CD4-positive, alpha-beta T cell (primary cell): ENCODE measurements at regions of chr12 and their contacts with region 1.

Region 1: DNA sequence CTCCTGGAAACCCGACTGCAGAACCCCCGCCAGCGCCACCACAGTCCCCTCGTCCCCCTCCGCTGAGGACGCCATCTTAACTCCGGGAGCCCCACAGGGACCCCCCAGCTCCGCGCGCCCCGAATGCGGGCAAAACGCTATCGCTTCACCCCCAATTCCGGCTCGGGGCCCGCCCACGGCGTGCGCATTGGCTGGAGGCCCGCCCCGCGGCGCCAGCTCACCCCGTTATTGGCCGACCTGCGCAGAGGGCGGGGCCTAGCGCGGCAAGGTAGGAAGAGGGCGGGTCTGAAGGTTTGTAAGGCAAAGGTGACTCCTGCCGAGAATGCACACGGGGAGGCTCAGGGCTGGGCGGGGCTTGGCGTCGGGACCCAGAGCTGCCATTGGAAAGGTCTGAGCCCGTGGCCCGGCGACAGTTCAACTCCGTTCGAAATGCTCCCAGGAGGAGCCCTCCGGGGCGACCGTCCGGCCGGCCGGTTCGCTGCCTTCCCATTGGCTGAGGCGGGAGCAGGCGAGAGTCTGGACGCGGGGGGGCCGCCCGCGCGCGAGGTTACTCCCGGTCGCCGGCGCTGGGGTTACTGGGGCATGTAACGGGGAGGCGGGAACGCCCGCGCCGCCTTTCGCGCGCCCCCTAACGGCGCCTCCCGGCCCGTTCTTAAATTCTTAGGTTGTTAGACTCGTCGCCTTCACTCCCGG is at the start of gene LPCAT3:
- DNase-seq: peak; percentile 94 to 99 (median 96)
- ATAC-seq: peak; percentile 96
- H3K4me3 ChIP-seq: peak within 1 kb of the TSS; percentile 98
- H3K4me3 Mint-ChIP-seq: peak within 1 kb of the TSS; percentile 87
- H3K27ac ChIP-seq: peak within 1 kb of the TSS; percentile 87 to 89
- H3K27ac Mint-ChIP-seq: peak within 1 kb of the TSS; percentile 62
- H3K4me1 ChIP-seq: peaks cover 24% of the 10 kb centered on the region
- H3K4me1 Mint-ChIP-seq: peaks cover 30% of the 10 kb centered on the region
- H3K27me3 ChIP-seq: no peaks in the 10 kb centered on the region
- H3K27me3 Mint-ChIP-seq: no peaks in the 10 kb centered on the region
- CTCF ChIP-seq: peak; percentile 87
- total RNA-seq, gene LPCAT3: 11.8 to 14.8 TPM

Region 2: DNA sequence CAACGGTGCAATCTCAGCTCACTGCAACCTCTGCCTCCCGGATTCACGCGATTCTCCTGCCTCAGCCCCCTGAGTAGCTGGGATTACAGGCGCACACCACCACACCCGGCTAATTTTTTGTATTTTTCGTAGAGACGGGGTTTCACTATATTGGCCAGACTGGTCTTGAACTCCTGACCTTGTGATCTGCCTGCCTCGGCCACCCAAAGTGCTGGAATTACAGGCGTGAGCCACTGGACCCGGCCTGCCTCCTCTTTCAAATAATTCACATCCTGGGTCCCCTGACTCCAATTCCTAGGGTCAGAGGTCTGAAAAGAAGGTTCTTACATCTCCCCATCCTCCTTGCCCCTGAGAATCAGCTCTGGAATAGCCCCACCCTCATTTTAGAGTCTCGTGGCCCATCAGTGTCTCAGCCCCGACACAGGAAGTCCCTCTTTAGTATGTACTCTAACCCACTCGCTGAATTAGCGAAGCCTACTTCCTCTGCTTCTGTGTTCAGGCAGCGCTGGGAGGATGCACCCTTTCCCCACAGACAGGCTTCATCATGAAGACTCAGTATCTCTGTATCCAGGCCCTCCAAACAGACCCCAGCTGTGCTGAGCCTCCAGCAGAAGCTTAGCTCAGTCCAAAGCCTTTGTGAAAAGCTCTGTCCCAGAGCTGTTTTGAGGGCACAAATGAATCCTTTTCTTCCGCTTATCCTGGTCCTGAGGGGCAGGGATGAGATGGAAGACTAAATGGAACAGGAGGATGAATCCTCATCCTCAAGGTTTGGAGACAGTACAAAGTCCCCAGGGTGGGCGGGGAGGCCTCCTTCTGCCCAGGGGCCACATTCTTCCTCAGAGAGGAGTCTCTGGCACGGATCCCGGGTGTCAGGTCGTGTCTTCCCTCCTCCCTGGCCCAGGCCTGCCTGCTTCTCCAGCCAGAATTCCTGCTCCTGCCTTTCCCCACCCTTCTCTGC is 386.2 kb before region 1 on chr12:
- CTCF ChIA-PET with region 1: no interaction called
- POLR2A ChIA-PET with region 1: no interaction called
- intact Hi-C with region 1: no loop called
- DNase-seq: peak in 13 of 14 experiments; percentile 29 to 84 (median 47)
- ATAC-seq: peak; percentile 81
- H3K4me3 ChIP-seq: peak overlapping the region; percentile 51
- H3K4me3 Mint-ChIP-seq: peak overlapping the region; percentile 78
- H3K27ac ChIP-seq: peak overlapping the region; percentile 66 to 67
- H3K27ac Mint-ChIP-seq: peak overlapping the region; percentile 91
- H3K4me1 ChIP-seq: peaks cover 70% of the 10 kb centered on the region
- H3K4me1 Mint-ChIP-seq: peaks cover 63% of the 10 kb centered on the region
- H3K27me3 ChIP-seq: no peaks in the 10 kb centered on the region
- H3K27me3 Mint-ChIP-seq: no peaks in the 10 kb centered on the region
- CTCF ChIP-seq: no peak

Region 3: DNA sequence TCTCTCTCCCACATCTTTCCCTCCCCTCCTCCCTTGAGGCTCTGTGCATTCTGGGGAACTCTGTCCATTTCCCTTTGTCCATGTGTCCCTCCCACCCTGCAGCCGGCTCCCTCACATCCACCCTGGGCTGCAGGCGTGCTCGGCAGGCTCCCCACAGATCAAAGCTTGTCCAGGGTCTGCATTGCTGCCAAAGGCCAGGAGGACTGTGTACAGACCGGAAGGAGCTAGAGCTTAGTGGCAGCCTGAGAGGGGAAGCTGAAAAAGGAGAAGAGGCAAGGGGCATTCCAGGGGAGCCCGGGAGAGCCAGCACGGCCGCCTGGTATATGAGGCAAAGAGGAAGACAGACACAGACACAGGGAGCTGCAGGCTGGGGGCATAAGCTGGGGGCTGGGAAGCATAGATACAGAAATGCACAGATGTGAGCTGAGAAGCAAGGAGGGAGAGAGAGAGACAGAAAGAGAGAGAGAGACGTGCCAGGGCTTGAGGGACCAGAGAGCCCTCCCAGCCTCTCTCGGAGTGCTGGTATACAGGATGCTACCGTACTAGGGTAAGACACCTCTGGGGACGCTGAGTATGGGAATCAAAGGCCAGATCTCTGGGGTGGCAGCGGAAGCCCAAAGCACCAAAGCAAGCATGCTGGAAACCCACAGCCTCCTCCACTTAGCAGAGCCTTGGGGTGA is 225.8 kb before region 1 on chr12:
- CTCF ChIA-PET with region 1: no interaction called
- POLR2A ChIA-PET with region 1: no interaction called
- intact Hi-C with region 1: no loop called
- DNase-seq: peak in 12 of 14 experiments; percentile 41 to 75 (median 58)
- ATAC-seq: peak; percentile 69
- H3K4me3 ChIP-seq: peak overlapping the region; percentile 66
- H3K4me3 Mint-ChIP-seq: peak overlapping the region; percentile 96
- H3K27ac ChIP-seq: peak overlapping the region; percentile 72 to 81
- H3K27ac Mint-ChIP-seq: peak overlapping the region; percentile 93
- H3K4me1 ChIP-seq: peaks cover 79% of the 10 kb centered on the region
- H3K4me1 Mint-ChIP-seq: peaks cover 80% of the 10 kb centered on the region
- H3K27me3 ChIP-seq: no peaks in the 10 kb centered on the region
- H3K27me3 Mint-ChIP-seq: no peaks in the 10 kb centered on the region
- CTCF ChIP-seq: no peak

Region 4: GRCh38 chr12:6921996-6922946 is 96.2 kb before region 1 on chr12:
- CTCF ChIA-PET with region 1: interaction called, 3 read pairs
- POLR2A ChIA-PET with region 1: no interaction called
- intact Hi-C with region 1: loop called (anchors 5 kb)
- DNase-seq: no peak
- ATAC-seq: no peak
- H3K4me3 ChIP-seq: no peak overlapping the region
- H3K4me3 Mint-ChIP-seq: no peak overlapping the region
- H3K27ac ChIP-seq: no peak overlapping the region
- H3K27ac Mint-ChIP-seq: no peak overlapping the region
- H3K4me1 ChIP-seq: peaks cover 21% of the 10 kb centered on the region
- H3K4me1 Mint-ChIP-seq: peaks cover 24% of the 10 kb centered on the region
- H3K27me3 ChIP-seq: no peaks in the 10 kb centered on the region
- H3K27me3 Mint-ChIP-seq: no peaks in the 10 kb centered on the region
- CTCF ChIP-seq: no peak

Region 5: GRCh38 chr12:6965026-6965661 is 53.4 kb before region 1 on chr12:
- CTCF ChIA-PET with region 1: interaction called, 9 read pairs
- POLR2A ChIA-PET with region 1: interaction called, 8 read pairs
- intact Hi-C with region 1: loop called (anchors 1 to 2 kb)
- DNase-seq: peak; percentile 83 to 96 (median 86)
- ATAC-seq: peak; percentile 50
- H3K4me3 ChIP-seq: no peak overlapping the region
- H3K4me3 Mint-ChIP-seq: peak overlapping the region; percentile 79
- H3K27ac ChIP-seq: peak overlapping the region; percentile 38 to 39
- H3K27ac Mint-ChIP-seq: peak overlapping the region; percentile 90
- H3K4me1 ChIP-seq: peaks cover 70% of the 10 kb centered on the region
- H3K4me1 Mint-ChIP-seq: peaks cover 58% of the 10 kb centered on the region
- H3K27me3 ChIP-seq: no peaks in the 10 kb centered on the region
- H3K27me3 Mint-ChIP-seq: no peaks in the 10 kb centered on the region
- CTCF ChIP-seq: peak; percentile 94

Region 6: DNA sequence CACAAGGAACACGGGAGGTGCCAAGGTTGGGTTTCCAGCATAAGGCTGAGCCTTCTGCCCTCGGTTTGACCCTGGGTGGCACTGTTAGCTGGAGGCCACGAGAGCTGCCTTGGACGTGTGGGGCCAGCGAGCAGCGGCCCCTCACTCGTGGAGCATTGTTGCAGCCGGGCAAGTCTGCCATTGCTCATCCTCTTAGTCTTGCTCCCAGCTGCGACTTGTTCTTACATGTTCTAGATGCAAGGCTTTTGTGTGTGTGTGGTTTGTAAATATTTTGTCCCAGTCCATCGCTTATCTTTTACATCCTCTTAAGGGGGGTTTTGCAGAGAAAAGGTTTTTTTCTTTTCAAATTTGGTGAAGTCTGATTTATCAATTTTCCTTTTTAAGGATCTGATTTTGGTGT is 20.9 kb after region 1 on chr12:
- CTCF ChIA-PET with region 1: no interaction called
- POLR2A ChIA-PET with region 1: no interaction called
- intact Hi-C with region 1: no loop called
- DNase-seq: no peak
- ATAC-seq: no peak
- H3K4me3 ChIP-seq: no peak overlapping the region
- H3K4me3 Mint-ChIP-seq: no peak overlapping the region
- H3K27ac ChIP-seq: no peak overlapping the region
- H3K27ac Mint-ChIP-seq: no peak overlapping the region
- H3K4me1 ChIP-seq: no peaks in the 10 kb centered on the region
- H3K4me1 Mint-ChIP-seq: no peaks in the 10 kb centered on the region
- H3K27me3 ChIP-seq: no peaks in the 10 kb centered on the region
- H3K27me3 Mint-ChIP-seq: no peaks in the 10 kb centered on the region
- CTCF ChIP-seq: no peak

Region 7: GRCh38 chr12:7060353-7060954 is 42.0 kb after region 1 on chr12 and contains the start of gene C1S:
- CTCF ChIA-PET with region 1: no interaction called
- POLR2A ChIA-PET with region 1: no interaction called
- intact Hi-C with region 1: no loop called
- DNase-seq: no peak
- ATAC-seq: no peak
- H3K4me3 ChIP-seq: no peak within 1 kb of the TSS
- H3K4me3 Mint-ChIP-seq: no peak within 1 kb of the TSS
- H3K27ac ChIP-seq: no peak within 1 kb of the TSS
- H3K27ac Mint-ChIP-seq: no peak within 1 kb of the TSS
- H3K4me1 ChIP-seq: no peaks in the 10 kb centered on the region
- H3K4me1 Mint-ChIP-seq: no peaks in the 10 kb centered on the region
- H3K27me3 ChIP-seq: peaks cover 7 to 12% of the 10 kb centered on the region in 2 experiments
- H3K27me3 Mint-ChIP-seq: peaks cover 34% of the 10 kb centered on the region
- CTCF ChIP-seq: no peak
- total RNA-seq, gene C1S: 3.8 to 4.6 TPM

Region 8: DNA sequence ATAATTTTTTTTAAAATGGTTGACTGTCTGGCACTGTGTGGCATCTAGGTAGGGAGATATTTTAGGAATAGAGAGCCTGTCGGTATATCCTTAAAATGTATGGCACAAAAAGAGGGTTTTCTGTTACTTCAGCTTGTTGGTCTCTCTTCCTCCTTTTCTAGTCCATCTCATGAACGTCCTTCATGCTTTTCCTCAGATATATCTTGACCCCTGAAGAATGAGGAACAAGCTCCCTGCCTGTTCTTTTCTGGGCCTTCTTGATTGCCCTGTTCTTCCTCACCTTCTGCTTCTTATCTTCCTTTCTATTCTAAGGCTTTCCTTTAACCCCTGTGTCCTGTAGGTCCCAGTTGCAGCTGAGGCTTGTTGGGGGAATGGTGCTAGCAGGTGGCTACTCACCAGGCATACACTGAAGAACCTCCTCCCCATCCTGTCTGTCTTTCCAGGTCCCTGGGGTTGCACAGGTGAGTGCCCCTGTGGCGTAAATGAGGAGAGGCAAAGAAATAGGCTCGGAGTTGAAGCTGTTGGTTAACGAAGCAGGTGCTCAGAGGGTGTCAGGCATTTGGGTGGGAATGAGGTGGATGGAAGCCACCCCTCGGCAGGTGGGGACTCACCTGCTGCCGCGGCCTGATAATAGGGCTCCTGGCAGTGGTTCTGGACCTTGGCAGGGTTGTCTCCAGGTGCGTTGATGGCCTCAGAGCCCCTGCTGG is 80.9 kb after region 1 on chr12:
- CTCF ChIA-PET with region 1: no interaction called
- POLR2A ChIA-PET with region 1: no interaction called
- intact Hi-C with region 1: loop called in 1 of 2 experiments (anchors 5 kb)
- DNase-seq: no peak
- ATAC-seq: no peak
- H3K4me3 ChIP-seq: no peak overlapping the region
- H3K4me3 Mint-ChIP-seq: no peak overlapping the region
- H3K27ac ChIP-seq: no peak overlapping the region
- H3K27ac Mint-ChIP-seq: no peak overlapping the region
- H3K4me1 ChIP-seq: peaks cover 5% of the 10 kb centered on the region
- H3K4me1 Mint-ChIP-seq: peaks cover 18% of the 10 kb centered on the region
- H3K27me3 ChIP-seq: no peaks in the 10 kb centered on the region
- H3K27me3 Mint-ChIP-seq: no peaks in the 10 kb centered on the region
- CTCF ChIP-seq: no peak

Region 9: DNA sequence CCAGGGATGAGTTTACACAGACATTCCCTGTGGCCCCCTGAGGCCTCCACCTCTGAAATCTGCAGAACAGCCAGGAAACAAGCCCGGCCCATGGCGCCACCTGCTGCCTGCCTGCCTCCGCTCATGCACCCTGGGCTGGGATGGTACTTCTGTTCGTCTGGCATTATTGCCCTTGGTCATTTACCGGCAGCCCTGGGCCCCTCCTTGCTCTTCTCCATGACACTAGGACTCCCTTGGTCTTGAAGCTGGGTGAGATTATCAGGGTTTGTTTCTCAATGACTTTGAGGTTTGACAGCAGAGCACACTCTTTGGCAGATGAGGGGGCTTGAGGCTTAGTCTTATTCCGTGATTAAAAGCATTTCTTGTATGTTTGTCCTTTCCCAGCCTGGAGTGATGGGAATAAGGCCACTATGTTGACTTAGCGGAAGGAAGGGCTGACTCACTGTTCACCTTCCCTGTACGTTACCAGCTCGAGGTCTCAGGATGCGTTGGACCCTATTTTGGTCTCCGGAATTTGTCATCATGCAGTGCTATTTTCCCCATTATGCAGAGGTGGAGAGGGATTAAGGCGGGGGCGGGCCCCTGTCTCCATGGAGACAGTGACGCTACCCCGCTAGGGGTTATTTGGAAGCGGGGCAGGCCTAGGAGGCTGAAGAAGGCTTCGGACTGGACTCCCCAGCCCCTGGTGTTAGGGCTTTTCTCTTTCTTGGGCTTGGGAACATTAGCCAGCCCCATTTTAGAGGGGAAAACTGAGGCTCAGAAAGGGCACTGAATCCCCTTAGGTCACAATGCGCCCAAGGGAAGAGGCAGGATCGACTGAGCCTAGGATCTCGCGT is 170.3 kb after region 1 on chr12:
- CTCF ChIA-PET with region 1: interaction called, 3 read pairs
- POLR2A ChIA-PET with region 1: no interaction called
- intact Hi-C with region 1: loop called in 1 of 2 experiments (anchors 5 kb)
- DNase-seq: peak; percentile 43 to 79 (median 58)
- ATAC-seq: peak; percentile 44
- H3K4me3 ChIP-seq: peak overlapping the region; percentile 91
- H3K4me3 Mint-ChIP-seq: peak overlapping the region; percentile 98
- H3K27ac ChIP-seq: peak overlapping the region; percentile 91 to 93
- H3K27ac Mint-ChIP-seq: peak overlapping the region; percentile 97
- H3K4me1 ChIP-seq: peaks cover 27% of the 10 kb centered on the region
- H3K4me1 Mint-ChIP-seq: peaks cover 46% of the 10 kb centered on the region
- H3K27me3 ChIP-seq: no peaks in the 10 kb centered on the region
- H3K27me3 Mint-ChIP-seq: no peaks in the 10 kb centered on the region
- CTCF ChIP-seq: peak; percentile 63